ENCODE measurements at regions of chr17 and their contacts with region 1.

Region 1: GRCh38 chr17:58631523-58632323 is 60.1 kb downstream of the TEX14 start:
- DNase-seq: peak; percentile 73 to 97 (median 93)
- ATAC-seq: peak; percentile 89 to 90
- H3K4me3 Mint-ChIP-seq: no peak overlapping the region
- H3K27ac Mint-ChIP-seq: no peak overlapping the region
- H3K4me1 Mint-ChIP-seq: peaks cover 0 to 8% (median 0%) of the 10 kb centered on the region in 4 donors
- H3K27me3 Mint-ChIP-seq: no peaks in the 10 kb centered on the region

Region 2: DNA sequence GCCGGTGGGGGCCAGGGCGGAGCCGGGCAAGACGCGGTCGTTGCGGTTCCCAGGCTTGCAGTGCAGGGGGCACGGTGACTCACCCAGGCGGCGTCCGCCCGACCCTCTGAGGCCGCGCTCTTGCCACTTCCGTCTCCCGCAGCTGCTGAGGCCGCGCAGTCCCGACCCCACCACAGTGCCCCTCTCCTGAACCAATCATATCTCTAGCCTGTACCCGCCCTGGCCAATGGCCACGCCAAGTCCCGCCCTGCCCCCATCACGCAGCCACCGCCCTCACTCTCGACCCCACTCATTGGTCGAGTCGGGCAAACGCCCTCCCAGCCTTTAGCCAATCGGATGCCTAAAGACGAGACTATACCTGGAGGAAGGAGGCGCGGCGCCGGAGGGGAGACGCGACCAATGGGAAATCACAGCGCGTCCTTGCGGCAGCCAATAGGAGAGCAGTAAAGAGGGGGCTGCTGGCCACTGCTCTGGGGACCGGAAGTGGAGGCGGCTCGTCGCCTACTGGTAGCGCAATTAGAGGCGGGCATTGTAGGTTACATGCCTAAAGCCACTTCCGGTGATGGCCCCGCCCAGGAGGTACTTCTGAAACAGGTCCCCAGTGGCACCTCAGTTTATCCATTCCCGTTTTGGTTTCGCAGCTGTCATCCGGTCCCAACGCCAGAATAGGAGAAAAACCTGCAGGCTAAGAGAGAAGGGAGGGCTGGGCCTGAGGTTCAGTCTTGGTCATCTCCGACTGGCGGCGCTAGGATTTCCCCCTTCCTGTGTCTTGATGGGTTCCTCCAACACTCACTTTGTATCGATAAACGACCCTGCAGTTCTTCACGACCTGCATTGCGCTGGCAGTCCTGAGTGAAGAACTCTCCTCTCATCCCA is 113.8 kb before region 1 on chr17:
- POLR2A ChIA-PET with region 1: interaction called, 23 read pairs
- DNase-seq: peak; percentile 94 to 100 (median 100)
- ATAC-seq: peak; percentile 81 to 84
- H3K4me3 Mint-ChIP-seq: peak overlapping the region; percentile 77 to 98 (median 96)
- H3K27ac Mint-ChIP-seq: peak overlapping the region; percentile 91 to 98 (median 92)
- H3K4me1 Mint-ChIP-seq: peaks cover 31 to 54% (median 41%) of the 10 kb centered on the region in 4 donors
- H3K27me3 Mint-ChIP-seq: no peaks in the 10 kb centered on the region

Region 3: GRCh38 chr17:58595326-58595725 is 36.4 kb before region 1 on chr17:
- POLR2A ChIA-PET with region 1: no interaction called
- DNase-seq: no peak
- ATAC-seq: no peak
- H3K4me3 Mint-ChIP-seq: no peak overlapping the region
- H3K27ac Mint-ChIP-seq: no peak overlapping the region
- H3K4me1 Mint-ChIP-seq: peaks cover 0 to 3% (median 0%) of the 10 kb centered on the region in 4 donors
- H3K27me3 Mint-ChIP-seq: peaks cover 0 to 2% (median 0%) of the 10 kb centered on the region in 5 donors

Region 4: DNA sequence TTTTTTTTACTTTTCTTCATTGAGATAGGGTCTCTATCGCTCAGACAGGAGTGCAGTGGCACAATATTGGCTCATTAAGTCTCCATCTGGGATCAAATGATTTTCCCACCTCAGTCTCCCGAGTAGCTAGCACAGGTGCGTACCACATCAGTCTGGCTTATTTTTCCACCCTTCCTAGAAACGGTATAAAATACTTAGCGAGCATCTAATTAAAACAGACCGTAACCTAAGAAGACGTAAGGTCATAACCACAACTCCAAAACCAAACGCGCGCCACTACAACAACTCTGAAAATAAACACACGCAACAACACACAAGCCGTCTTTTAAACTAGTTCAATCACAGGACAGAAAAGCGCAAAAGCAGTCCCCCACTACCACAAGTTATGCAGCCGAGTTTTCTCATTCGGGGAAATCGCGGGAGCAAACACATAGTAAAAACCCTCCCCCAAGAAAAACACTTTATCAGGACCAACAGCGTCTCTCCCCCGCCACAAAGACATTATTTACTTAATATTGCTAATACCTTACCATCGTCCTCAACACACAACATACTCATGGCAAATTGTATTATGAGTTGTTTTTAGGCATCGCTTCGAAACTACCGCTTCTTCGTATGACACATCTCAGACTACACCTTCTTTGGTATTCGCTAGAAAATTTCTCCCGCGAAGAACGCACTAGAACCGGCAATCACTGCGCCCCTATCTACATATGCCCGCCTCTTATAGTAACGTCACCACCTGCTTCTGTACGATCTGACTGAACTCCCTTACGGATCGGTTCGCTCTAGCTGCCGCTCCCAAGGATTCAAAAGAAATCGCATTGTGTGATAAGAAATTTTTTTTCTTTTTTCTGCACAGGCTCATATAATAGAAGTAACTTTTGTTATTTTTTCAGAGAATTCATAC is 27.3 kb after region 1 on chr17:
- POLR2A ChIA-PET with region 1: interaction called, 18 read pairs
- DNase-seq: peak; percentile 33 to 93 (median 86)
- ATAC-seq: peak; percentile 82 to 84
- H3K4me3 Mint-ChIP-seq: peak overlapping the region; percentile 74 to 91 (median 86)
- H3K27ac Mint-ChIP-seq: peak overlapping the region; percentile 97 to 100 (median 99)
- H3K4me1 Mint-ChIP-seq: peaks cover 11 to 22% (median 18%) of the 10 kb centered on the region in 4 donors
- H3K27me3 Mint-ChIP-seq: no peaks in the 10 kb centered on the region

Region 5: GRCh38 chr17:58692239-58693055 is 60.7 kb after region 1 on chr17 and contains the start of gene RAD51C:
- POLR2A ChIA-PET with region 1: interaction called, 12 read pairs
- DNase-seq: peak; percentile 69 to 90 (median 82)
- ATAC-seq: peak; percentile 98
- H3K4me3 Mint-ChIP-seq: peak within 1 kb of the TSS; percentile 93 to 98 (median 96)
- H3K27ac Mint-ChIP-seq: peak within 1 kb of the TSS; percentile 89 to 98 (median 94)
- H3K4me1 Mint-ChIP-seq: peaks cover 9 to 35% (median 27%) of the 10 kb centered on the region in 4 donors
- H3K27me3 Mint-ChIP-seq: no peaks in the 10 kb centered on the region
- polyA plus RNA-seq, gene RAD51C: 46.6 to 50.7 (median 47.9) TPM

Region 6: GRCh38 chr17:58728786-58729185 is 97.1 kb after region 1 on chr17:
- POLR2A ChIA-PET with region 1: no interaction called
- DNase-seq: no peak
- ATAC-seq: no peak
- H3K4me3 Mint-ChIP-seq: no peak overlapping the region
- H3K27ac Mint-ChIP-seq: peak overlapping the region in 1 of 10 donors; percentile 17
- H3K4me1 Mint-ChIP-seq: no peaks in the 10 kb centered on the region
- H3K27me3 Mint-ChIP-seq: no peaks in the 10 kb centered on the region

Region 7: GRCh38 chr17:59155439-59156182 is 523.9 kb after region 1 on chr17 and contains the start of gene PRR11:
- POLR2A ChIA-PET with region 1: interaction called, 10 read pairs
- DNase-seq: peak in 7 of 10 donors; percentile 74 to 98 (median 95)
- ATAC-seq: peak; percentile 88 to 89
- H3K4me3 Mint-ChIP-seq: no peak within 1 kb of the TSS
- H3K27ac Mint-ChIP-seq: no peak within 1 kb of the TSS
- H3K4me1 Mint-ChIP-seq: peaks cover 2 to 42% (median 16%) of the 10 kb centered on the region in 4 donors
- H3K27me3 Mint-ChIP-seq: no peaks in the 10 kb centered on the region
- polyA plus RNA-seq, gene PRR11: 0.32 to 0.66 TPM in 2 of 3 donors, not detected in the other